ENCODE measurements at regions of chr1 and their contacts with region 1.

Region 1: DNA sequence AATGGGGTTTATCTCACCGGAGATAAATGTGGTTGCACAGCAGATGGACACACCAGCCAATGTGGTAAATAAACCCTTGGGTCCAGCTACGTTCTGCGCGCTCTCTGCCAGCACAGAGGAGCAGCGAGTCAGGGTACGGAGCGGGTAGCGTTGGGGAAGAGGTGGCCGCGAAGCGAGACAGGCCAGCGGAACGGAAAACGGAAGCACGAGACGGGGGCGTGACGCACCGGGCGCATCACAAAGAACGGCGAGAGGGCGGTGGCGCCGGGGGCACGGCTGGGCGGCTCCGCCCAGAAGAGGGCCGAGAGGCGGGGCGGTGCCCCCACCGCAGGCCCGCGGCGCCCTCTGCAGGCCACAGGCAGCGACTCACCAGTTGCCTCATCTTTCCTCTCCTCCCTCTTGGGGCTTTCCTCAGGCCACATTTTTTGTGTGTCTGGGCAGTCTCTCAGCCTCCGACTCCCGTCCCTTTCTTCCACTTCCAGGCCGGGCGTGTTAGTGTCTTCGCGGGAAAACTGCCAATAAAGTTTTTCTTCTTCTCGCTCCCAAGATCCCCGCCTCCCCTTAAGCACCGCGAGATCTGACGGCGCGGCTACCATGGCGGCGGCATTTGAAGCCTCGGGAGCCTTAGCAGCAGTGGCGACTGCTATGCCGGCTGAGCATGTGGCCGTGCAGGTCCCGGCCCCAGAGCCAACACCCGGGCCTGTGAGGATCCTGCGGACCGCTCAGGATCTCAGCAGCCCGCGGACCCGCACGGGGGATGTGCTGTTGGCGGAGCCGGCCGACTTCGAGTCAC is at the start of gene DDX20:
- DNase-seq: peak; percentile 80
- ATAC-seq: peak; percentile 93
- H3K4me3 ChIP-seq: peak within 1 kb of the TSS; percentile 88
- H3K27ac ChIP-seq: peak within 1 kb of the TSS; percentile 87
- H3K4me1 ChIP-seq: peaks cover 3% of the 10 kb centered on the region; the same call in 1 of the 2 replicates
- H3K27me3 ChIP-seq: no peaks in the 10 kb centered on the region
- CTCF ChIP-seq: peak; percentile 84 to 97 (median 93)
- EP300 ChIP-seq: peak; percentile 8 to 58; a peak in 1 of 4 replicates
- POLR2A ChIP-seq: peak; percentile 92
- RAD21 ChIP-seq: peak; percentile 60
- polyA plus RNA-seq, gene DDX20: 7.2 to 10.9 TPM

Region 2: DNA sequence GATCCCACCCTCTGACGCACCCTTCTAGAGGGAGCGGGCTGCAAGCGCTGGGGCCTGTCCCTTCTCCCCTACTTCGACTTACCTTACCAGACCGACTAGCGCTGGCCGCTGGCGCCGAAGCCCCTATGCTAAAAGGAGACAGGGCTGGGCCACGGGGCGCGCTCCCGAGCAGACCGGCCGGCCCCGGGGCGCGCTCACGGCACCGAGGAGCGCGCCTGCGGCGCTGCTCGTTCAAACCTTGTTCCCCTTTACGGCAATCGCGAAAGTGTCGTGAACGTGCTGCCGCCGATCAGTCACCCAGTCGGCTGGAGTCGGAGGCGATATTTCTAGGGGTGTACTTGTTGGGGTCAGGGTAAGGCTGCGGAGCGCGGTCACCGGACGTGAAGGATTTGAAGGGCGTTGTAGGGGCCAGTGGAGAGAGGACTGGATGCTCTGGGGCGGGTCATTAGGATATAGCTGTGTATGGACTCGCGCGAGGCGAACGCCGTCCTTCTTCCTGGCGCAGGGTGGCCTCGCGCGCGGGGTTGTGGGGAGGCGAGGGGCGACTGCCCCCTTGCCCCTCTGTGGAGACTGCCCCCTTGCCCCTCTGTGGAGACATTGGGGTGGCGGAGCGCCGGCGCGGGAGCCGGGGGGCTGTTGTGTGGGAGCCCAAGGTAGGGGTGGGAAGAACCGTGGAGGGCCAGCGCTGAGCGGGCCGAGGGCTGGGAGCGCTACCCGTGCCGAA is 615.4 kb before region 1 on chr1 and contains the starts of genes CEPT1 and DRAM2:
- CTCF ChIA-PET with region 1: no interaction called
- POLR2A ChIA-PET with region 1: interaction called, 3 read pairs
- RAD21 ChIA-PET with region 1: no interaction called
- SMC1A ChIA-PET with region 1: no interaction called
- in situ Hi-C with region 1: no loop called
- intact Hi-C with region 1: loop called (anchors 10 kb)
- DNase-seq: peak; percentile 76
- ATAC-seq: peak; percentile 73
- H3K4me3 ChIP-seq: peak within 1 kb of the TSS; percentile 95
- H3K27ac ChIP-seq: peak within 1 kb of the TSS; percentile 89
- H3K4me1 ChIP-seq: peaks cover 14% of the 10 kb centered on the region
- H3K27me3 ChIP-seq: no peaks in the 10 kb centered on the region
- CTCF ChIP-seq: no peak
- EP300 ChIP-seq: no peak
- POLR2A ChIP-seq: peak; percentile 90
- RAD21 ChIP-seq: no peak
- polyA plus RNA-seq, gene CEPT1: 29.4 to 55.5 TPM
- polyA plus RNA-seq, gene DRAM2: 88.3 to 146 TPM

Region 3: GRCh38 chr1:111481387-111482221 is 273.9 kb before region 1 on chr1:
- CTCF ChIA-PET with region 1: interaction called, 29 read pairs
- POLR2A ChIA-PET with region 1: interaction called, 3 read pairs
- RAD21 ChIA-PET with region 1: interaction called, 5 read pairs
- SMC1A ChIA-PET with region 1: interaction called, 21 read pairs
- in situ Hi-C with region 1: no loop called
- intact Hi-C with region 1: no loop called
- DNase-seq: peak; percentile 48
- ATAC-seq: peak; percentile 88
- H3K4me3 ChIP-seq: no peak overlapping the region
- H3K27ac ChIP-seq: no peak overlapping the region
- H3K4me1 ChIP-seq: peaks cover 16% of the 10 kb centered on the region
- H3K27me3 ChIP-seq: no peaks in the 10 kb centered on the region
- CTCF ChIP-seq: peak; percentile 79 to 97 (median 83)
- EP300 ChIP-seq: no peak
- POLR2A ChIP-seq: no peak
- RAD21 ChIP-seq: peak; percentile 95

Region 4: DNA sequence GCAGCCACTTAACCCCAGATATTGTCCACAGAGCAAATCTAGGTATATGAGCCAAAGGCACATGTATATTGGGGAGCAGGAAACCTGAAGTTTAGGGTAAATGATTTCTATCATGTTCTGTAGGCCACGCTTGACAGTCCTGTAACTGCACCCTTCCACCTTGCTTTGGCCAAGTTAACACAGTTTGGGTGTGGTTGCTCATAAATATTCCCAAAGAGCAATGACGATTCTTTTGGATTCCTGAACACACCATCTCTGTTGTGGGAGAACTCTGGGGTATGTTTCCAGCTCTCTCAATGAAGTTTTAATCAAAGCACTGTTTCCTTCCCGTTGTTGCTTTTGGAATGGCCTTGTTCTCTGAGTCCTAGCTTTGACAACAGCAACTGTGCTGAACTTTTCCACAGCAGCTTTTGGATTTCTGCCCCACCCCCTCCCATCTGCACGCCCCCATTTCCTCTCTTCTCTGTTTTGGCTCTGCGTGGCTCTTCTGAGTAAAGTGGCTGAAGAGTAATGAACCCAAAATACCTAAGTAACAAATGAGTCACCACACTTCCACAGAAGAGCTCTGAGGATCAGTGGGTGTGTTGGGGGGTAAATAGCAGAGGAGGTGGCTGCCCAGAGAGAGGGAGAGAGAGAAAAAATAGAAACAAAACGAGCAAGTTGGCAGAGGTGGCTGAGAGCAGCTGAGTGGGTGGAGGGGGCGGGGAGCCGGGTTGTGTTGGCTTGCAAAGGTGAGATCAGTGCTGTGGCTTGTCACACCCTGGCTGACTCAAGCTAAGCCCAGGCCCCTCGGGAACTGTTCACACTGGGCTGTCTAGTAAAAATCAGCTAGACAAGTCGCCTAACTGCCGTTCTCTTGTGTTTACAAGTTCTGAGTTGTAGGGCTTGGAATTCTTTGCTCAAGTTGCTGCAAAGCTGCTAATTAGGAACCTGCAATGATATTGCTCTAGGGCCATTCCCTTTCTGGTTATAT is 162.9 kb before region 1 on chr1:
- CTCF ChIA-PET with region 1: interaction called, 7 read pairs
- POLR2A ChIA-PET with region 1: interaction called, 4 read pairs
- RAD21 ChIA-PET with region 1: interaction called, 4 read pairs
- SMC1A ChIA-PET with region 1: interaction called, 4 read pairs
- in situ Hi-C with region 1: no loop called
- intact Hi-C with region 1: loop called (anchors 1 kb)
- DNase-seq: peak; percentile 98
- ATAC-seq: peak; percentile 92
- H3K4me3 ChIP-seq: peak overlapping the region; percentile 54
- H3K27ac ChIP-seq: peak overlapping the region; percentile 83
- H3K4me1 ChIP-seq: peaks cover 79% of the 10 kb centered on the region
- H3K27me3 ChIP-seq: no peaks in the 10 kb centered on the region
- CTCF ChIP-seq: no peak
- EP300 ChIP-seq: peak; percentile 78 to 93
- POLR2A ChIP-seq: peak; percentile 58; the same call in 1 of the 2 replicates
- RAD21 ChIP-seq: peak; percentile 39

Region 5: DNA sequence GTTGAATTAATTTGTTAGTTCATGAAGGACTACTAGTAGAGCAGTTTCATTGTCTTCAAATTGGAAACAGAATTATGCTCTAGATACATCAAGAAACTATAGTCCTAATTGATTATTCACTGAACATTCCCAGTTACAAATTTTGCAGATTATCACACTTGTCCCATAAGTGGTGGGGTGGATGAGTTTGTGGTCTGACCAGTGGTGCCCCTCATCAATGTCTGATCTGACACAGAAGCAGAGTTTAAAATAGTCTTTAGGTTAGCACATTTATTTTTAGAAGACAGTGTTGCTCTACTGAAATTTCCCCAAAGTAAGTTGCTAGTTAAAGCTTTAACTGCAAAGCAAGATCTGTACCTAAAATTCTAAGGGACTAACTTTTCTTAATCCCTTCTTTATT is 59.2 kb before region 1 on chr1:
- CTCF ChIA-PET with region 1: interaction called, 5 read pairs
- POLR2A ChIA-PET with region 1: interaction called, 3 read pairs
- RAD21 ChIA-PET with region 1: interaction called, 14 read pairs
- SMC1A ChIA-PET with region 1: interaction called, 4 read pairs
- in situ Hi-C with region 1: no loop called
- intact Hi-C with region 1: no loop called
- DNase-seq: peak; percentile 20
- ATAC-seq: peak; percentile 70
- H3K4me3 ChIP-seq: peak overlapping the region; percentile 28; the same call in 1 of the 2 replicates
- H3K27ac ChIP-seq: peak overlapping the region; percentile 35; the same call in 1 of the 2 replicates
- H3K4me1 ChIP-seq: peaks cover 25% of the 10 kb centered on the region
- H3K27me3 ChIP-seq: no peaks in the 10 kb centered on the region
- CTCF ChIP-seq: no peak
- EP300 ChIP-seq: peak; percentile 38 to 64; a peak in 1 of 4 replicates
- POLR2A ChIP-seq: no peak
- RAD21 ChIP-seq: no peak

Region 6: GRCh38 chr1:111739194-111739924 is 16.2 kb before region 1 on chr1 and contains the start of gene INKA2:
- CTCF ChIA-PET with region 1: interaction called, 41 read pairs
- POLR2A ChIA-PET with region 1: interaction called, 6 read pairs
- RAD21 ChIA-PET with region 1: interaction called, 12 read pairs
- SMC1A ChIA-PET with region 1: interaction called, 7 read pairs
- in situ Hi-C with region 1: no loop called
- intact Hi-C with region 1: loop called (anchors 1 kb)
- DNase-seq: peak; percentile 47
- ATAC-seq: peak; percentile 90
- H3K4me3 ChIP-seq: peak within 1 kb of the TSS; percentile 86
- H3K27ac ChIP-seq: peak within 1 kb of the TSS; percentile 45
- H3K4me1 ChIP-seq: peaks cover 11% of the 10 kb centered on the region
- H3K27me3 ChIP-seq: peaks cover 0 to 8% of the 10 kb centered on the region in 2 experiments; a peak in 2 of 4 replicates
- CTCF ChIP-seq: peak in 1 of 3 experiments; percentile 11; a peak in 1 of 6 replicates
- EP300 ChIP-seq: no peak
- POLR2A ChIP-seq: peak; percentile 41; the same call in 1 of the 2 replicates
- RAD21 ChIP-seq: no peak
- polyA plus RNA-seq, gene INKA2: 0.38 TPM in 1 of 2 experiments, not detected in the other

Region 7: DNA sequence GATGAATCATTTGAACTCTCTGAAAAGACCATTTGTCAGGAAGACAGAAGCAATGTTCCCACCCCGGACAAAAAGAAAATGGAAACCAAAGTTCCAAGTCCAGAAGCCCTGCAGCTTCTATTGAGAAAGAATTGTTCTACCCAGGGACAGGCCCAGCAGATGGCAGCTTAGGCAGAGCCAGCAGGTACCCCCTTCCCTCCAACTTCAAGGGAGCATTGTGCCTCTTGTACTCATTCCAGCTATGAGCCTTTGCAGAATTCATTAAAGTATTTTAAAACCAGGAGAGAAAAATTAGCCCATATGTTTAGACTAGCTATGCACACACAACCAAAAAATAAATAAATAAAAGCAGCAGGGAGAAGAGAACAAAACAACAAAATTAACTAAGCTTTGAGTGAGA is 319.2 kb after region 1 on chr1:
- CTCF ChIA-PET with region 1: no interaction called
- POLR2A ChIA-PET with region 1: no interaction called
- RAD21 ChIA-PET with region 1: no interaction called
- SMC1A ChIA-PET with region 1: no interaction called
- in situ Hi-C with region 1: no loop called
- intact Hi-C with region 1: no loop called
- DNase-seq: no peak
- ATAC-seq: no peak
- H3K4me3 ChIP-seq: no peak overlapping the region
- H3K27ac ChIP-seq: no peak overlapping the region
- H3K4me1 ChIP-seq: no peaks in the 10 kb centered on the region
- H3K27me3 ChIP-seq: no peaks in the 10 kb centered on the region
- CTCF ChIP-seq: no peak
- EP300 ChIP-seq: no peak
- POLR2A ChIP-seq: no peak
- RAD21 ChIP-seq: no peak